ENCODE measurements at regions of chr15 and their contacts with region 1.

Region 1: GRCh38 chr15:63686352-63686751 is 89.2 kb downstream of the FBXL22 start:
- DNase-seq: no peak
- H3K4me3 ChIP-seq: no peak overlapping the region
- H3K27ac ChIP-seq: no peak overlapping the region
- H3K4me1 ChIP-seq: no peaks in the 10 kb centered on the region
- H3K27me3 ChIP-seq: no peaks in the 10 kb centered on the region
- CTCF ChIP-seq: no peak
- EP300 ChIP-seq: no peak
- POLR2A ChIP-seq: no peak

Region 2: DNA sequence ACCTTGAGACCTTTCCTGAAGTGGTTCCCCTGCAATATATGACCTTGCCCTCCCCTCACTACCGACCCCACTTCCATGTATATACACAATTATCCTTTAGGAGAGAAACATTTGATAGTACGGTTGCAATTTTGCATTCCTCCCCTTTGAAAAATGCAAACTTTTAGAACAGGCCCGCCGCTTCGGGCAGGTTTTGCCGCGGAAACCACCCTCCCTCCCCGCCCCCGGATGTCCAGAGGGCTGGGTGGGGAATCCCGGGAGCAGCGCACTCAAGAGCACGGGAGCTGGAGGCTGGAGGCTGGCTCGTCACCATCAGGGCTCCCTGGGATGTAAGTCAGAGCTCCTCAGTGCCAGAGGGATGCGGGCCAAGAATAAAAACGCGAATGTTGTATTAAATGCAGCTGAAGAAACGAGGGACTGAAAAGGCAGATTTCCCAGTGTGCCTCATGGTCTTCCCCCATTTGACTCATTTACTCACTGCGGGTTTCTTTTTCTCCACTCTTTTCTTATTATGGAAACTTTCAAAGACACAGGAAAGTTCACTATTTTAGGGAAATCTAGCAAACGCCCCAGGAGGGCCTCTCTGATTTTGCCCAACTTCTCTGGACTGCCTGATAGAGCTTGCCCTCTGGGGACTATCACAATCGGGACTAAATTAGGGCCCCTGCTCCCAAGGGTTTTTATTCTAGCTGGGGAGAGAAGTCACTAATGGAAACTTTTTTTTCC is 184.9 kb before region 1 on chr15:
- intact Hi-C with region 1: no loop called
- DNase-seq: peak; percentile 97
- H3K4me3 ChIP-seq: peak overlapping the region in 3 of 4 donors; percentile 31 to 38 (median 34)
- H3K27ac ChIP-seq: peak overlapping the region; percentile 94 to 99 (median 98)
- H3K4me1 ChIP-seq: peaks cover 5 to 41% (median 39%) of the 10 kb centered on the region in 4 donors
- H3K27me3 ChIP-seq: no peaks in the 10 kb centered on the region
- CTCF ChIP-seq: no peak
- EP300 ChIP-seq: peak in 2 of 4 donors; percentile 6 to 11
- POLR2A ChIP-seq: no peak

Region 3: DNA sequence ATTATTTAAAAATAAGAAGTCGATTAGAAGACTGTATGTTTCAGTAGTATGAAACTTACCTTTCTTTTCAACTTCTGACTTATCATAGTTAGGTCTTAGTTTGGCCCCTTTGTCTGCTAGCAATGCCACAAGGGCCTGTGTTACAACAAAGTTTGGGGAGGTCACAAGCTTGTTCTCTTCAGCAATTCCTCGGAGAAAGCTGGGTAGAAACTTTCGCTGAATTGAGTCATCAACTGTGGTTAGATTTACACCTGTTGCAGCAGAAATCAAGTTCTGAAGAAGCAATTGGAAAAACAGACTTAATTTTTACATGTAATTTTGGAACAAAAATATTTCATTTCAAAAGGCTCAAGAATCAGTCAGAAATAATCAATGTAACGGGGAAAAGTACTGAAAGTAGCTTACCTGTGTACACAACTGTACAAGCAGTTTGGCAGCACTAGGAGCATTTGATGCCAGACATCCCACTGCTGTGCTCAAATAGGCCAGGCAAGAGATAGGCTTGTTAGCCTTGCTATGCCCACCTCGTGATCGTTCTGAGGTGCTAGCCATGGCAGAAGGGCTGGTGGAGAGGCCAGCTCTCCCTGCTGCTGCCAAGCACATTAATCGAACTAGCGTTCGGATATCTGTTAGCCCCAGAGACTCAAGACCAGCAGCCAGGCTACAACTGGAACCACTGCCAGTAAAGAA is 30.5 kb before region 1 on chr15:
- intact Hi-C with region 1: loop called (anchors 5 kb)
- DNase-seq: no peak
- H3K4me3 ChIP-seq: no peak overlapping the region
- H3K27ac ChIP-seq: no peak overlapping the region
- H3K4me1 ChIP-seq: no peaks in the 10 kb centered on the region
- H3K27me3 ChIP-seq: no peaks in the 10 kb centered on the region
- CTCF ChIP-seq: no peak
- EP300 ChIP-seq: no peak
- POLR2A ChIP-seq: no peak

Measured in sigmoid colon (tissue), 7 donors.